Activated T-helper 1 cell treated with anti-CD3 and anti-CD28 coated beads, Interleukin-12 subunit alpha, Interleukin-12 subunit beta, Interleukin-2, Interleukin-4 antibody, amounts not matched to agents 30 ng/mL and 10 ng/mL and 1 ng/mL, durations not matched to agents 14 hours and 24 hours and 36 hours (primary cell): ENCODE measurements at regions of chr7 and their contacts with region 1.

Region 1: DNA sequence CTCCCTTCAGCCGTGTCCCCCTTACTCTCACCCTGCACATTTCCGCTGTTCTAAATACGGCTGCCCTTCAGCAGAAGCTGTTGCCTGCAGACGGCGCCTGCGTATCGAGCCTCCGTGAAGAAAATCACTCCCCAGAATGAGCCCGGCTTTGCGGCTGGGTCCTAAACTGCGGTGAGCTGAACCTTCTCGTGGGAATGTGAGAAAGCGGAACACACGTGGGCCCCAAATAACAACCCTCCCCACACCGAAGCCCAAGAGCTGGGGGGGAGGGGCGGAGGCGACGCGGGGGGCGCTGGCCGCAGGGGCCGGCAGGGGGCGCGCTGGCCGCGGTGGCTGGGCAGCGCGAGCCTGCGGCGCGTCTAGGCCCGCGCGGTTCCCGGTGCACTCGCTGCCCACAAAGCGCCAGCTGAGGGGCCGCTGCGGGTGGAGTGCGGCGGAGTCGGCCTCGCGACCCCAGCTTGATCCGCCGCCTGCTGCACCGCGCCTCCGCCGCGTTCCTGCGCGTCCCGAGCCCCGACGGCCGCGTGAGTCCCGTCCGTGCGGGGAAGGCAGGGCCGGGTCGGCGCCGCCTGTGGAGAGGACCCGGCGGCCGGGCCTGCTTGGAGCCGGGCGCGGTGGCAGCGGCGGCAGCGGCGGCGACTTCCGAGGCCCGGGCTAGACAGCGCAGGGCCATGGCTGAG is at the start of gene ZNF398:
- DNase-seq: peak; percentile 74
- H3K4me3 Mint-ChIP-seq: peak within 1 kb of the TSS; percentile 89
- H3K27ac Mint-ChIP-seq: peak within 1 kb of the TSS; percentile 91
- H3K4me1 Mint-ChIP-seq: peaks cover 42% of the 10 kb centered on the region
- H3K27me3 Mint-ChIP-seq: no peaks in the 10 kb centered on the region
- total RNA-seq, gene ZNF398: 14.1 and 14.4 TPM in 2 replicates

Region 2: GRCh38 chr7:148967032-148967372 is 180.2 kb before region 1 on chr7:
- intact Hi-C with region 1: no loop called
- DNase-seq: no peak
- H3K4me3 Mint-ChIP-seq: peak overlapping the region; percentile 60
- H3K27ac Mint-ChIP-seq: no peak overlapping the region
- H3K4me1 Mint-ChIP-seq: peaks cover 32% of the 10 kb centered on the region
- H3K27me3 Mint-ChIP-seq: peaks cover 3% of the 10 kb centered on the region

Region 3: DNA sequence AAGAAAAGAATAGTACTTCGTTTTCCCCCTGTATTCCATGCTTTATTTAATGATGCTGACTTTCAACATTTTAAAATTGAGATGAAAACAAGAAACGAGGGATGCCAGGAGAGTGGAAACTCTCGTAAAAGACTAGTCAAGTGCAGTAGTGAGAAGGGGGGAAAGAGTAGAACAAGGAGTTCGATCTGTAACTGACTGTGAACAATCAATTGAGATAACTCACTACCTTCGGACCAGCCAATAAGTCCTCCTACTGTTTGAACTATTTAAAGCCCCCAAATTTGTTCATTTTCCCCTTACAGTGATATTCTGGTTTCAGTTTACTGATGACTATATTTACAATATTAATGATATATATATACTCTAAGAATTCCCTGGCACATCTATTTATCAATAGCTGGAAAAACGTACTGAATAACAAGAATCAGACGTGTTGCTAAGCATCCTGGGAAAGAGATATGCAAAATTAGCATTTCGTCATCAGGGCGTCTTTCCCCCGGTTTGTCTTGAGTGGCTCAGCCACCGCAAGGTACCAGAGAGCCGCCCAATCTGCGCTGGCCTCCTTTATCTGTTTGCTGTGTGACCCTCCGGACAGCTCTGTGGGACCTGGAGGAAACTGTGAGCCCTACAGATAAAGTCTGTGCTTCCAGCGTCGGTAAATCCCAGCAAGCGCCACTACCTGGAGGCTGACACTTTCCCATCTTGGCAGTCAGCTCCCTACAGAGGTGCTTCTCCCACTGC is 160.0 kb before region 1 on chr7:
- intact Hi-C with region 1: loop called (anchors 1 kb)
- DNase-seq: peak; percentile 78
- H3K4me3 Mint-ChIP-seq: peak overlapping the region; percentile 94
- H3K27ac Mint-ChIP-seq: peak overlapping the region; percentile 92
- H3K4me1 Mint-ChIP-seq: peaks cover 46% of the 10 kb centered on the region
- H3K27me3 Mint-ChIP-seq: peaks cover 21% of the 10 kb centered on the region

Region 4: GRCh38 chr7:149067876-149068275 is 79.3 kb before region 1 on chr7:
- intact Hi-C with region 1: loop called (anchors 1 kb)
- DNase-seq: no peak
- H3K4me3 Mint-ChIP-seq: peak overlapping the region; percentile 12
- H3K27ac Mint-ChIP-seq: no peak overlapping the region
- H3K4me1 Mint-ChIP-seq: peaks cover 8% of the 10 kb centered on the region
- H3K27me3 Mint-ChIP-seq: no peaks in the 10 kb centered on the region

Region 5: GRCh38 chr7:149195180-149196150 is 48.3 kb after region 1 on chr7 and contains the start of gene ZNF282:
- intact Hi-C with region 1: loop called (anchors 1 kb)
- DNase-seq: peak; percentile 73
- H3K4me3 Mint-ChIP-seq: peak within 1 kb of the TSS; percentile 90
- H3K27ac Mint-ChIP-seq: peak within 1 kb of the TSS; percentile 90
- H3K4me1 Mint-ChIP-seq: peaks cover 55% of the 10 kb centered on the region
- H3K27me3 Mint-ChIP-seq: peaks cover 3% of the 10 kb centered on the region
- total RNA-seq, gene ZNF282: 49.4 and 55.8 TPM in 2 replicates

Region 6: GRCh38 chr7:149422129-149422913 is 275.1 kb after region 1 on chr7:
- intact Hi-C with region 1: loop called (anchors 1 kb)
- DNase-seq: peak; percentile 73
- H3K4me3 Mint-ChIP-seq: peak overlapping the region; percentile 66
- H3K27ac Mint-ChIP-seq: peak overlapping the region; percentile 61
- H3K4me1 Mint-ChIP-seq: no peaks in the 10 kb centered on the region
- H3K27me3 Mint-ChIP-seq: peaks cover 4% of the 10 kb centered on the region

Region 7: DNA sequence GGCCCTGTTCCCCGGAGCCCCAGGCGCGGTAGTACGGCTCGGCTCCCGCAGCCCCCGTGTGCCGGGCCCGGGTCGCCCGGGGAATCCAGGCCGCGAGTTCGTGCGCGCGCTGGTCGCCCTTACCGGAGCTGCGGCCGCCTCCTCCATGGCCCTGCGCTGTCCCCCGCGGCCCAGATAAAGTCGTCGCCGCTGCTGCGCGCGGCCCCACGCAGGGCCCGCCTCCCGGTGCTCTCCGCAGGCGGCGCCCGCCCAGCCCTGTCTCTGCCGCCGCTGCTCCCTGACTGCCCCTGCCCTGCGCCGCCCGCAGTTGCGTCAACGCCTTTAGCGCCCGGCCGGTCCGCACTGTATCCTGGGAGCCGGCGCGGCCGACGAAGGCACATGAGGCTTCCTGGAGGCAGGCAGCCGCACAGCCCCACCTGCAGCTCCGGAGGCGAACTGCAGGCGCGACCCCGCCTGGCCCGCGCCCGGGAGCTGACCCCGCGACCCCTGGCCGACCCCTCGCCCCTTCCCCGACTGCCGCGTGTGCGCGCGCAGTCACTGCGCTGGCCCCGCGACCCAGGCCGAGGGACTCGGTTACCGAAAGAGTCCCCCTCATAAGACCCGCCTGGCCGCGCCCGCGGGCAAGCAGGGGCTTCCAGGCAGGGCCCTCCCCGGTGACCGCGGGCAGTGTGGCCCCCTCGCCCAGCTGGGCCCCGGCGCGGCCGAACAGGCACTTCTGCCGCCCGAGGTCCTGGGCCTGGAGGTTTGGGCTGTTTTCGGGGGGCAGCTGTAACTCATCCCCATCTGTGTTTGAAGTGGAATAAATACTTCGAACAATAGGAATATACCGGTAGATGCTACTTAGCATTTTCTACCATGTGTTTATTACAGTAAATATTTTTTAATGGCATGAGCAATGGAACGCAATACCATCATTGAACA is 477.5 kb after region 1 on chr7:
- intact Hi-C with region 1: loop called (anchors 1 kb)
- DNase-seq: peak; percentile 91
- H3K4me3 Mint-ChIP-seq: peak overlapping the region; percentile 89
- H3K27ac Mint-ChIP-seq: peak overlapping the region; percentile 83
- H3K4me1 Mint-ChIP-seq: peaks cover 32% of the 10 kb centered on the region
- H3K27me3 Mint-ChIP-seq: peaks cover 6% of the 10 kb centered on the region